Activated CD4-positive, alpha-beta T cell treated with anti-CD3 and anti-CD28 coated beads for 36 hours (primary cell): ENCODE measurements at regions of chr4 and their contacts with region 1.

Region 1: DNA sequence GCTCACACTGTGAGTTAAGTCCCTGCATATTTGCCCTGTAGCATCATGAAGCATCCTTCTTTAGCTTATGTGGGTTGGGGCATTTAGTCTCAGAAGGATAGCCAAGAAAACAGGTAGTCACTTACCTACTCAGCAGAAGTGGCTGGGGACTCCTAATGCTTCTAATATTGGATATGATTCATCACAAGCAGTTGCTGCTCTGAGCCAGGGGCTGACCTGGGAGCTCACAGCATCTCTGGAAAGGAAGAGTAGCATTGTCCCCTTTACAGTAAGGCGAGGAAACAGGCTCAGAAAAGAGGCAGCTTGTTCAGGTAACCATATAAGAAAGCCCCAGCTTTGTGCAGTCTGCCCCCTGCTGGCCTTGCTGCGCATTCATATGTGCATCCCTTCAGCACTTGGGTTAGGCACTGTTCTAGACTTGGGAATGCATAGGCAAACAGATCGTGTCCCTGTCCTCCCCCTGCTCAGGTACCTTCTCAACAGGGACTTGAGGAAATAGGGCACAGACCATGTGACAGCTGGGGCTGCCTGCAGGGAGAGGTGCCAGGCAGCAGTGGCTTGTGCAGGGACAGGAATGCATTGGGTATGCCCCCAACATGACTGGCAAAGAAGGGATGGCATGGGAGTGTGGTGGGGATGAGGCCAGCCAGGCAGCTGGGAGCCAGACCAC is 35.7 kb upstream of the TBC1D14 start:
- DNase-seq: peak; percentile 90
- ATAC-seq: peak; percentile 94
- H3K4me3 Mint-ChIP-seq: no peak overlapping the region
- H3K27ac Mint-ChIP-seq: no peak overlapping the region
- H3K4me1 Mint-ChIP-seq: no peaks in the 10 kb centered on the region
- H3K27me3 Mint-ChIP-seq: no peaks in the 10 kb centered on the region

Region 2: DNA sequence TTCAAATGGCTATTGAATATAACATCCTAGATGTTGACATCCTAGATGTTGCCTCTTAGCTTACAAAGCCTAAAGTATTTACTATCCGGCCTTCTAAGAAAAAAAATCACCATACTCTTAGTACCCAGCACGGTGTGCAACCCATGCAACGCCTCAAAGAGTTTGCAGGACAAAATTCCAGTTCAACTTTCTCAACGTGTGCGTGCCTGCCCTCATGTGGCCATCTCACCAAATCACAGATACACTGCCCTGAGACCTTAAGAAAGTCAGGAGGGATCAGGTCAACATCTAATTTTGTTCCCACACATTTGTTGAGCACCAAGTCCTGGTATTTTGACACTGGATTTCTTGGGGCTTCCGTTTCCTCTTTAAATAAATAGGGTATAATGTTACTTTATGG is 1049.3 kb before region 1 on chr4:
- CTCF ChIA-PET with region 1: no interaction called
- POLR2A ChIA-PET with region 1: no interaction called
- intact Hi-C with region 1: no loop called
- DNase-seq: peak; percentile 31
- ATAC-seq: no peak
- H3K4me3 Mint-ChIP-seq: no peak overlapping the region
- H3K27ac Mint-ChIP-seq: no peak overlapping the region
- H3K4me1 Mint-ChIP-seq: peaks cover 8% of the 10 kb centered on the region
- H3K27me3 Mint-ChIP-seq: no peaks in the 10 kb centered on the region

Region 3: GRCh38 chr4:6343950-6344408 is 529.9 kb before region 1 on chr4:
- CTCF ChIA-PET with region 1: no interaction called
- POLR2A ChIA-PET with region 1: no interaction called
- intact Hi-C with region 1: no loop called
- DNase-seq: peak; percentile 20
- ATAC-seq: peak; percentile 60
- H3K4me3 Mint-ChIP-seq: no peak overlapping the region
- H3K27ac Mint-ChIP-seq: no peak overlapping the region
- H3K4me1 Mint-ChIP-seq: no peaks in the 10 kb centered on the region
- H3K27me3 Mint-ChIP-seq: peaks cover 15% of the 10 kb centered on the region

Region 4: GRCh38 chr4:6709230-6710114 is 164.5 kb before region 1 on chr4 and contains the start of gene MRFAP1L1:
- CTCF ChIA-PET with region 1: interaction called, 157 read pairs
- POLR2A ChIA-PET with region 1: interaction called, 3 read pairs
- intact Hi-C with region 1: no loop called
- DNase-seq: peak; percentile 98
- ATAC-seq: peak; percentile 73
- H3K4me3 Mint-ChIP-seq: peak within 1 kb of the TSS; percentile 98
- H3K27ac Mint-ChIP-seq: peak within 1 kb of the TSS; percentile 98
- H3K4me1 Mint-ChIP-seq: peaks cover 46% of the 10 kb centered on the region
- H3K27me3 Mint-ChIP-seq: no peaks in the 10 kb centered on the region
- total RNA-seq, gene MRFAP1L1: 36.4 to 45.0 TPM

Region 5: GRCh38 chr4:6716018-6716911 is 157.7 kb before region 1 on chr4 and contains the start of gene BLOC1S4:
- CTCF ChIA-PET with region 1: interaction called, 157 read pairs
- POLR2A ChIA-PET with region 1: interaction called, 3 read pairs
- intact Hi-C with region 1: loop called (anchors 1 kb)
- DNase-seq: peak; percentile 93
- ATAC-seq: peak; percentile 80
- H3K4me3 Mint-ChIP-seq: peak within 1 kb of the TSS; percentile 92
- H3K27ac Mint-ChIP-seq: peak within 1 kb of the TSS; percentile 92
- H3K4me1 Mint-ChIP-seq: peaks cover 27% of the 10 kb centered on the region
- H3K27me3 Mint-ChIP-seq: no peaks in the 10 kb centered on the region
- total RNA-seq, gene BLOC1S4: 10.1 to 16.7 TPM

Region 6: DNA sequence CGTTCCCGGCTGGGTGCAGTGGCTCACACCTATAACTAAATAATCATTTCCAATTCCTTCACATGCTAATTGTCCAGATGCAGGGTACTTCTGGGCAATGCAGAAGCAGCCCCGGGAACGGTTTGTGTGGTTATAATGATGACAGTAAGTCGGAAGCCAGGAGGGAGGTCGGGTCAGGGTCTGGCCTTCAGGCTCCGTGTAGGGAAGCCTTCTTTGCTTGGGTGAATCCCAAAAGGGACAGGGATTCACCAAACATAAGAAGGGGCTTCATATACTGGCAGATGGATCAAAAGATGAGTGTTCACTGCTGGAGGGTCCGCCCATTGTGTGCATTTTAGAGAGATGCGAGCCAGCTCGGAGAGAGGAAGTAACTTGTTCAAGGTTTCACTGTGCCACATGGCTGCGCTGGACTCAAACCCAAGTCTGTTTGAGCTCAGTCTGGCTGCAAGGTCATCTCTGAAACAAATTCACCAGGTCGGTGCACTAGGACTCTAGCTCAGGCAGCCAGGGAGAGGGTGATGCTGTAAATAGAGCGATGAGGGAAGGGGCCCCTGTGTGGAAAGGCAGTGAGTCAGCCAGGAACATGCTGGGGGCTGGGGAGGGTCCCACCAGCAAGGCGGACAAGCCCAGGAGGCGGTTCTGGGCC is 96.2 kb before region 1 on chr4:
- CTCF ChIA-PET with region 1: interaction called, 17 read pairs
- POLR2A ChIA-PET with region 1: no interaction called
- intact Hi-C with region 1: loop called (anchors 2 to 5 kb)
- DNase-seq: no peak
- ATAC-seq: no peak
- H3K4me3 Mint-ChIP-seq: no peak overlapping the region
- H3K27ac Mint-ChIP-seq: peak overlapping the region; percentile 75
- H3K4me1 Mint-ChIP-seq: peaks cover 34% of the 10 kb centered on the region
- H3K27me3 Mint-ChIP-seq: no peaks in the 10 kb centered on the region

Region 7: DNA sequence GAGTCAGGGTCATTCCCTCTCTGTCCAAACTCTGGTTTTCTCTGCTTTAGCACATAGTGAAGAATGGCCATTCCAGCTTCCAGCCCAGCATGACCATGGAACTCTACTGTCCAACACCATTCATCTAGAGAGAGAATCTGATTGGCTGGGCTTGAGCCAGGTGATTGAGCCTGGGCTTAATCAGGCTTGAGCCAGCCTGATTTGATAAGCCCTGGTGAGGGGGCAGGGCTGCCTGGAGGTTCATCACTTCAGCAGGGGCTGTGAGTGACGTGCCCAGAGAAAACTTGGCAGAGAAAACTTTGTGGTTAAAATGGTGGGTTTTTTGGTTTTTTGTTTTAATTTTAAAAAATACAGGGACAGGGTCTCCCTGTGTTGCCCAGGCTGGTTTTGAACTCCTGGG is 28.9 kb before region 1 on chr4:
- CTCF ChIA-PET with region 1: interaction called, 12 read pairs
- POLR2A ChIA-PET with region 1: no interaction called
- intact Hi-C with region 1: no loop called
- DNase-seq: no peak
- ATAC-seq: no peak
- H3K4me3 Mint-ChIP-seq: no peak overlapping the region
- H3K27ac Mint-ChIP-seq: no peak overlapping the region
- H3K4me1 Mint-ChIP-seq: peaks cover 3% of the 10 kb centered on the region
- H3K27me3 Mint-ChIP-seq: no peaks in the 10 kb centered on the region

Region 8: DNA sequence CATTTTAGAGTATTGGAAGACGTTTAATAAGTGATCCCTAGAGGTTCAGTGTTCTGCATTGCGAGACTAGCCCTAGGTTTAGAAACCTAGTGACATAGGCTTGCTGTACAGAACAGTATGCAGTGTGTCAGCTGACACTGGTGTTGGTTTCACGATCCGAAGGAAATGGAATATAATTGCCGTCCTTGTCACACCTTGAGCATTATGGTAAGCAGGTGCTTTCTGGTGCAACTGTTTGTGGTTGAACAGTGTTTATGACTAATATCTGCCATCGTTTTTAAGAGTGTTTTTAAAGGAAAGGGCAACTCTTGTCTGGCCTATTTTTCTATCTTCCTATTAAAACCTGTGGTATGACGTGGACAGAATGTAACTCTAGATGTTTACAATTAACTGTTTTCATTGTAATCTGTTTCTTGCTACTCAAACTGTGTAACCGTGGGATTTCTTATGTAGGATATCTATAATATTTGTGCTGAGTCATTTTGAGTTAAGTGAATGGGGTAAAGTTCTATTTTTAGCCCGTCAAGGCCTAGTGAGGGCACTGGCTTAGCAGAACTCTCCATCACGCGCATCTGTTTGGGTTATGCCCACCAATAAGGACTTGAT is 18.1 kb before region 1 on chr4:
- CTCF ChIA-PET with region 1: interaction called, 14 read pairs
- POLR2A ChIA-PET with region 1: no interaction called
- intact Hi-C with region 1: no loop called
- DNase-seq: peak; percentile 48
- ATAC-seq: peak; percentile 95
- H3K4me3 Mint-ChIP-seq: peak overlapping the region; percentile 38
- H3K27ac Mint-ChIP-seq: peak overlapping the region; percentile 88
- H3K4me1 Mint-ChIP-seq: peaks cover 27% of the 10 kb centered on the region
- H3K27me3 Mint-ChIP-seq: no peaks in the 10 kb centered on the region

Region 9: DNA sequence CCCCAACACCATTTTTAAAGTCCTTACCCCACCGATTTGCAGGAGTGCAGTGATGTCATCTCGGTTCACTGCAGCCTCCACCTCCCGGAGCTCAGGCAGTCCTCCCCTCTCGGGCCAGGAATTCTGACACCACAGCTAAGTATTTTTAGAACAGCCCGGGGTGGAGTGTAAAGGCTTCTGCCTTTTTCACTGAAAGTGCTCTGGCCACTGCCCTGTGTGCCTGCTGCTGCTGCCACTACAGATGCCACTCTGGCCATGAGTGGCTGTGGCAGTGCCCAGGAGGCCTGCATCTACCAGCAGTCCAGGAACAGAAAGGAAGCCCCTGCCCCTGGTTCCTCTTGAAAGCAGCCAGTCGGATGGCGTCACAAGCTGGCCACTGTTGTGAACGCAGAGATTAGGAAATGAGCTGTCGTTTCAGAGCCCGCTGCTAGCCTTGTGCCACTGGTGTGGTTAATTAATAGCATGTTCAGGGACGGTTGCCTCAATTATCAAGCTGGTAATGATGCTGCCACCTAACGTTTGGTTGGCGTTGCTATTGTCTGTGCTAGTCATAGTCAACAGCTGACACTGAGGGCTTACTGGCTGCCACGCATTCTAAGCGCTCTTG is 12.1 kb after region 1 on chr4:
- CTCF ChIA-PET with region 1: interaction called, 36 read pairs
- POLR2A ChIA-PET with region 1: no interaction called
- intact Hi-C with region 1: no loop called
- DNase-seq: peak; percentile 36
- ATAC-seq: peak; percentile 60
- H3K4me3 Mint-ChIP-seq: no peak overlapping the region
- H3K27ac Mint-ChIP-seq: peak overlapping the region; percentile 33
- H3K4me1 Mint-ChIP-seq: no peaks in the 10 kb centered on the region
- H3K27me3 Mint-ChIP-seq: no peaks in the 10 kb centered on the region